ENCODE measurements at regions of chr2 and their contacts with region 1.

Region 1: GRCh38 chr2:174868878-174869277 is 104.6 kb upstream of the CHRNA1 start:
- DNase-seq: no peak
- ATAC-seq: no peak
- H3K4me3 ChIP-seq: no peak overlapping the region
- H3K4me1 ChIP-seq: no peaks in the 10 kb centered on the region
- CTCF ChIP-seq: no peak

Region 2: DNA sequence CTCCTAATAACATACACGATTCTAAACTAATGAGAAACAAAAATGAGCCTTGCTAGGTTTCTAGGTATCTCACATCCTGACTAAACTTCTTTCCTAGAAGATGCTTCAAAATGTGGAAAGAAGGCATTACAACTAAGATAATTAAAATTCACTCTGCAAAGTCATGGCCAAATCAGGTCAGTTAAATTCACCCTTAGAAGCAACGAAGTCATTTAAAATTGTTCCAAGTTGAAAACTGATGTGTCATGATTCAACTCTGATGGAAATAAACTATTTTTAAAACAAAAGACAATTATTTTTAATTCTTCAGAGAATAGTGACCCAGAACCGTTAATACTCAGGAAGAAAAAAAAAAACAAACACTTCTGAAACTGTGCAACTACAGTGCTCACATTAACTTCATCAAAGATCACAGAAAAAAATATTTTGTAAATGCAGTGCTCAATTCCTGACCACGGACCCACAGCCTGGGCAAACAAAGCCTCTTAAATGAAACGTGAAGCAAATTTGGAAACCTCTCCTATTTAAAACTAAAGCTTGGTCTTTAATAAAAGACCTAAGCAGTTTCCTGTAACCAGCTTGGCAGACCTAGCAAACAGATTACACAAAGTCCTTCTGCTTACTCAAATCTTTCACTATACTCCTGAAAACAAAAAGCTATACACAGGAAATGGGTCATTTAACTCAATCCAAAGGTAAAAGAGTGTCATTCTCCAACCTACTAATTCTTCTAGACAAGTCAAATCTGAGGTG is 97.3 kb after region 1 on chr2:
- intact Hi-C with region 1: loop called in 1 of 2 experiments (anchors 5 kb)
- DNase-seq: no peak
- ATAC-seq: no peak
- H3K4me3 ChIP-seq: no peak overlapping the region
- H3K4me1 ChIP-seq: no peaks in the 10 kb centered on the region
- CTCF ChIP-seq: no peak